ENCODE measurements at regions of chr17 and their contacts with region 1.

Region 1: DNA sequence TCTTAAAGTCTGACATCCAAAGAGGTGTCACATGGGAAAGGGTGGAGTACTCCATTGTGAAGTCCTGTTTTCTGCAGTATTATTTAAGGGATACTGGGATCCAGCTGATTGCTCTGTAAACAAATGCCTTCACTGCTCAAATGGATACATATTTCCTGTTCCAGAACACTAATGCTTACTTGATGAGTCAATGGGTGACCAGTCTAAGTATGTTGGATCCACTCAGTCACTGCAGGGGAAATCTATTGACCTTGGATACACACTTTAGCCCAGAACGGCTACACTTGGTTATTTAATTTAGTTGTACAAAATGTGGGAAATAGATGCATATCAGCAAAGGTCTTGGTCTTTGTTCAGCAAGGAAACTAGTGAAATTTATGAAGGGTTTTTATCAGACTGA is 261.4 kb downstream of the MAP2K4 start:
- DNase-seq: peak; percentile 90
- ATAC-seq: peak; percentile 98
- H3K4me3 ChIP-seq: no peak overlapping the region
- H3K27ac ChIP-seq: no peak overlapping the region
- H3K4me1 ChIP-seq: no peaks in the 10 kb centered on the region; the same call in 1 of the 2 replicates
- H3K27me3 ChIP-seq: no peaks in the 10 kb centered on the region
- CTCF ChIP-seq: no peak
- POLR2A ChIP-seq: no peak
- RAD21 ChIP-seq: no peak

Region 2: DNA sequence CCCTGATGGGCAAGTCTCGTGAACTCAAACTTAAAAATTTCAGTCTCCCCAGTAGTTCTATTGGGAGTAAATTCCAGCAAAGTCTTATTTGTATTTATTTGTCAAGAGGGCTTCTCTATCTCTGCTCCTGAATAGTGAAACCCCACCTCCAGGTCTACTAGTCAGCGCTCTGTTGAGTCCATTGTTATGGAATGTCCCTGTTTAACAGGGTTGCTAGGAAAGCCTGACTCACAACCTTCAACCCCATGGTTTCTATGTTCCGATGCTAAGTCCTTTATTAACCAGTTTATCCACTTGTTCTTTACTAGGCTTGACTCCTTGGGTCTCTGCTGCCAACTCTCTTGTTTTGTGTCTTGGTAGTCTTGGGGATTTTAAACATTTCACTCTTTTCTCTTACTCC is 133.0 kb after region 1 on chr17:
- CTCF ChIA-PET with region 1: no interaction called
- POLR2A ChIA-PET with region 1: no interaction called
- dilution Hi-C with region 1: no loop called
- in situ Hi-C with region 1: no loop called
- intact Hi-C with region 1: loop called (anchors 5 kb)
- DNase-seq: peak; percentile 94
- ATAC-seq: peak; percentile 95
- H3K4me3 ChIP-seq: no peak overlapping the region
- H3K27ac ChIP-seq: no peak overlapping the region
- H3K4me1 ChIP-seq: peaks cover 8% of the 10 kb centered on the region
- H3K27me3 ChIP-seq: no peaks in the 10 kb centered on the region
- CTCF ChIP-seq: no peak
- POLR2A ChIP-seq: no peak
- RAD21 ChIP-seq: peak; percentile 19

Region 3: DNA sequence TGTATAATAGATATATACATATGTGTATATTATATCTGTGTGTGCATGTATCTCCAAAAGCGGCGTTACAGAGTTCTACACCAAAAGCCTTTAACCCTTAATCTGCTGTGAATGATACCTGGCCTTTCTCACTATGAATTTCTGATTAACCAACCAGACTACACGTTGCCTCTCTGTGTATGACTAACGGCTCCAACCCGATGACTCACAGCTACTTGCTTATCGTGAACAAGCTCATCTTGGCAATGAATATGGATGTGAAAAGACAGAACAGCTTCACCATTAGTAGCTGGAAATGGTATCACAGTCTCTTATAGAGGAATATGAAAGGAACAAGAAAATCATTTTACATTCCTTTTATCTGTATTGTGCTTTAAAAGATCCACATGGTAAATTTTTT is 483.5 kb after region 1 on chr17:
- CTCF ChIA-PET with region 1: no interaction called
- POLR2A ChIA-PET with region 1: no interaction called
- dilution Hi-C with region 1: no loop called
- in situ Hi-C with region 1: no loop called
- intact Hi-C with region 1: no loop called
- DNase-seq: peak; percentile 96
- ATAC-seq: peak; percentile 96
- H3K4me3 ChIP-seq: no peak overlapping the region
- H3K27ac ChIP-seq: no peak overlapping the region
- H3K4me1 ChIP-seq: no peaks in the 10 kb centered on the region
- H3K27me3 ChIP-seq: no peaks in the 10 kb centered on the region
- CTCF ChIP-seq: no peak
- POLR2A ChIP-seq: no peak
- RAD21 ChIP-seq: no peak